ENCODE measurements at regions of chr4 and their contacts with region 1.

Region 1: DNA sequence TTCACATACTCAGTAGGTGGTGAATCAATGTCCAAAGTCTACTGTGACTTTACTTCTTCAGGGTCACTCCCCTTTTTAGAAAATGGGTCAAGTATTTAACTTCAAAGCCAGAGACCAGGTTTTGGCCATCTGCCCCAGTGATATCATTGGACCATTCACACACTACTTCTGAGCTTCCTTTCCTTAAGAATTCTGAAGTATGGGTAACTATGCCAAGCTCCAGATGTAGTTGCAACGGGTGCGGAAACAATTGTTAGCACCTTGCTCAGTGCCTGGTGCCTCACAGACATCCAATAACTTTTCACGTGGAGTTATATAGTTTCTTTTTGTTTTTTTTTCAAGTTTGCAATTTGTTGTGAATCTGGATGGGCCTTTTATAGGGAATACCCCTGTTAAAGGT is 62.6 kb downstream of the TTC29 start:
- DNase-seq: no peak
- ATAC-seq: no peak
- H3K4me3 ChIP-seq: no peak overlapping the region
- H3K4me3 Mint-ChIP-seq: no peak overlapping the region
- H3K27ac ChIP-seq: no peak overlapping the region
- H3K27ac Mint-ChIP-seq: no peak overlapping the region
- H3K4me1 ChIP-seq: no peaks in the 10 kb centered on the region
- H3K4me1 Mint-ChIP-seq: no peaks in the 10 kb centered on the region
- H3K27me3 ChIP-seq: peaks cover 0 to 2% of the 10 kb centered on the region in 2 experiments
- H3K27me3 Mint-ChIP-seq: peaks cover 0 to 3% of the 10 kb centered on the region in 2 donors

Region 2: DNA sequence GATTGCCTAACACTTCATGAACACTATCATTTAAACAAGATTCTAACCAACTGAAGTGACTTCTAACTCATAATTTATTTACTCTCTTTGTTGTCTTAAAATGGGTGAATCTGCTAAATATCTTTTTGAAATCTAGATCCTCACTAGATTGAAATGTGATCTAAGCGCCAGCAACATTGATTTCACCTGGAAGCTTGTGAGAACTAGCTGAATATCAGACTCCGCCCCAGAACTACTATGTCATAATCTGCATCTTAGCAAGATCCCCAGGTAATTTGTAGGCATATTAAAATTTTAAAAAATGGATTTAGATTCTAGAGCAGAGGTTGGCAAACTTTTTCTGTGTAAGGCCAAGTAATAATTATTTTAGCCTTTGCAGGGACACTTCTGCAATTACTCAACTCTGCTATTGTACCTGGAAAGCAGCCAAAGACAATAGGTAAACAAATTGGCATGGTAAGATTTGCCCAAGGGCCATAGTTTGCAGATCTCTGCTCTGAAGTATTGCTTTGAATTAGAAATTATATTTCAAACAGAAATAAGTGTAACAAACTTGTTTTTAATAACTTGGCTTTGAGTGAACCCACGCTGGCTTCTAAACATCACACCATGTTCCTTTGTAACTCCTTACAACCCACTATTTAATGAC is 547.2 kb before region 1 on chr4:
- CTCF ChIA-PET with region 1: no interaction called
- POLR2A ChIA-PET with region 1: interaction called in 1 of 2 experiments, 14 read pairs
- DNase-seq: no peak
- ATAC-seq: no peak
- H3K4me3 ChIP-seq: no peak overlapping the region
- H3K4me3 Mint-ChIP-seq: no peak overlapping the region
- H3K27ac ChIP-seq: no peak overlapping the region
- H3K27ac Mint-ChIP-seq: no peak overlapping the region
- H3K4me1 ChIP-seq: peaks cover 0 to 4% of the 10 kb centered on the region in 2 experiments
- H3K4me1 Mint-ChIP-seq: peaks cover 0 to 6% (median 6%) of the 10 kb centered on the region in 3 donors
- H3K27me3 ChIP-seq: no peaks in the 10 kb centered on the region
- H3K27me3 Mint-ChIP-seq: no peaks in the 10 kb centered on the region

Region 3: GRCh38 chr4:146647615-146648460 is 235.2 kb before region 1 on chr4:
- CTCF ChIA-PET with region 1: no interaction called
- POLR2A ChIA-PET with region 1: no interaction called
- DNase-seq: no peak
- ATAC-seq: no peak
- H3K4me3 ChIP-seq: no peak overlapping the region
- H3K4me3 Mint-ChIP-seq: no peak overlapping the region
- H3K27ac ChIP-seq: no peak overlapping the region
- H3K27ac Mint-ChIP-seq: no peak overlapping the region
- H3K4me1 ChIP-seq: no peaks in the 10 kb centered on the region
- H3K4me1 Mint-ChIP-seq: peaks cover 0 to 8% (median 2%) of the 10 kb centered on the region in 3 donors
- H3K27me3 ChIP-seq: peaks cover 25 to 38% of the 10 kb centered on the region in 2 experiments
- H3K27me3 Mint-ChIP-seq: peaks cover 75 to 78% of the 10 kb centered on the region in 2 donors